Natural killer cell (primary cell): ENCODE measurements at regions of chr18 and their contacts with region 1.

Region 1: GRCh38 chr18:3593904-3594661 is 144.1 kb downstream of the TGIF1 start:
- DNase-seq: peak; percentile 86 to 96
- ATAC-seq: peak; percentile 67 to 87 (median 85)
- H3K4me3 ChIP-seq: peak overlapping the region; percentile 53
- H3K4me3 Mint-ChIP-seq: peak overlapping the region; percentile 93
- H3K27ac ChIP-seq: peak overlapping the region; percentile 97
- H3K27ac Mint-ChIP-seq: peak overlapping the region; percentile 99
- H3K4me1 ChIP-seq: peaks cover 47% of the 10 kb centered on the region
- H3K4me1 Mint-ChIP-seq: peaks cover 47% of the 10 kb centered on the region in 2 donors
- H3K27me3 ChIP-seq: no peaks in the 10 kb centered on the region
- H3K27me3 Mint-ChIP-seq: no peaks in the 10 kb centered on the region
- CTCF ChIP-seq: peak; percentile 75

Region 2: DNA sequence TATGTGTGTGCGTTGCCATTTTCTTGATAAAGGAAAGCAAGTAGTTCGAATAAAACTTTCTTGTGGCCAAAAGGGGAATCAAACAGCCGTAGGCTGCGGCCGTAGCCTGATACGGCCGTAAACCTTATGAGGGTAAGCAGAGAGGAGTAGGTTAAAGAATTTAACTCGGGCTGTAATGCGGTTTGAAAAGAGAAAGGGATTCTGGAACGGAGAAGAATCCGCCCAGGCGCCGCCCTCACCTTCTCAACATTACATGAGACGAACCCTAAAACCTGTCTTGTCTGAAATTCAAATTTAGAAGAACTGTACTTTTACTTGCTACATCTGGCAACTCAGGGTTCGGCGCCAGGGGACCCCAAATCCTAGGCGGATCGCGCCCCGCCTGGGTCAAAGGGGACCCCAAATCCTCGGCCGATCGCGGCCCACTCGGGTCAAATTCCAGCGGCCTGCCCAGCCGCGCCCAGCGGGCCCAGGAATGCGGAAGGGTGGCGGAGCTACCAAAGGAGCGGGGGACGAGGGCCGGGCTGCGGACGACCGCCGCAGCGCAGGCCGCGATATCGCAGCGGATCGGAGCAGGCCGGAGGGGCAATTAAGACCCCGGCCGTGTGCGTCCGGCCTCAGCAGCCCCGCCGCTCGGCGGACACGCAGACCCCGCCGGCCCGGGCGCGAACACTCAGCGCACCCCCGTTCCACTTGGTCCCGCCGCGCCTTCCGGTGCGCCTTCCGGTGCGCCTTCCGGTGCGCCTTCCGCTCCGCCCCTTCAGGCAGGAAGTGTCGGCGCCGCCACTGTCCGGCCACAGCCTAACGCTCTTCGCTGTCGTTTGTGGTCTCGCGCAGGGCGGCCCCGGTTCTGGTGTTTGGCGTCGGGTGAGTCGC is 332.5 kb before region 1 on chr18 and contains the start of gene MYL12B:
- intact Hi-C with region 1: loop called (anchors 5 kb)
- DNase-seq: peak; percentile 82 to 91
- ATAC-seq: peak; percentile 72 to 88 (median 86)
- H3K4me3 ChIP-seq: peak within 1 kb of the TSS; percentile 96
- H3K4me3 Mint-ChIP-seq: peak within 1 kb of the TSS; percentile 94
- H3K27ac ChIP-seq: peak within 1 kb of the TSS; percentile 99
- H3K27ac Mint-ChIP-seq: peak within 1 kb of the TSS; percentile 88
- H3K4me1 ChIP-seq: peaks cover 36% of the 10 kb centered on the region
- H3K4me1 Mint-ChIP-seq: peaks cover 82 to 85% of the 10 kb centered on the region in 2 donors
- H3K27me3 ChIP-seq: no peaks in the 10 kb centered on the region
- H3K27me3 Mint-ChIP-seq: no peaks in the 10 kb centered on the region
- CTCF ChIP-seq: no peak
- total RNA-seq, gene MYL12B: 204 to 214 (median 210) TPM

Region 3: DNA sequence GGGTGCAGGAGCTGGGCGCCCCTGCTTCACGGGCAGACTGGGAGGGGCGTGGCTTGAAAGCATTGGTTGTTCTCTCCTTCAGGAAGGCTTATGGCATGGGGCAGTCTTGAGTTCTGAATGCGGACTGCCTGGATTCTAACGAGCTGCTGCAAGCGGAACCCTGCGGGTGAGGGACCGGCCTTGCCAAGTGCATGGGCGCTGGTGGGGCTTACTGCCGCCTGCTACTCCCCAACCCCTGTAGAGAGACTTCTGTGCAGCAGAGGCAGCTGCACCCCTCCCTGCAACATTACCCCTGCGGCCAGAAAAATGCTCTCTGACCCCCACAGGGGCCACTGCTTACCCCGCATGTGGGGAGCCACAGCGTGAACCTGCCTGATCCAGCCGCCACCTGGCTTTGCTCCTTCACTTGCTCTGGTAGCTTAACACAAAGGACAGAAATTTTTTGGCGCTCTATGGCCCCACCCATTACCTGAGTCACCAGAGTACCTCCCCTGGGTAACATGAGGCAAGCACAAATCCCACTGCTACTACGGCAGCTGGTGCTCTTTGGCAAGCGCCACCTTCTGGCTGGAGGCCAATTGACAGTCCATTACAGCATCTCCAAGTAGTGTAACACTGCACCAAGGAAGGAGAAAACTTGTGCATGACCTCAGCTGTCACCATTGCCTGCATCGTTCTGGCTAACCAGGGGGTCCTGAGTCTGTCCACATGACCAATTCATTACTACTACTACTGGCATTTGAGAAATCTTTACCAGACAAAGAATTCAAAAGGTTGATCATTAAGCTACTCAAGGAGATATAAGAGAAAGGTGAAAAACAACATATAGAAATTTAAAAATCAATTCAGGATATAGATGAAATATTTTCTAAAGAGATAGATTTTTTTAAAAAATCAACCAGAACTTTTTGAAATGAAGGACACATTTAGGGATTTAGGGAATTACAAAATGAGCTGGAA is 296.8 kb before region 1 on chr18:
- intact Hi-C with region 1: loop called (anchors 2 kb)
- DNase-seq: peak; percentile 87 to 95
- ATAC-seq: peak; percentile 98 to 99 (median 99)
- H3K4me3 ChIP-seq: peak overlapping the region; percentile 81
- H3K4me3 Mint-ChIP-seq: peak overlapping the region; percentile 93
- H3K27ac ChIP-seq: peak overlapping the region; percentile 52
- H3K27ac Mint-ChIP-seq: peak overlapping the region; percentile 37 to 88
- H3K4me1 ChIP-seq: peaks cover 14% of the 10 kb centered on the region
- H3K4me1 Mint-ChIP-seq: peaks cover 7 to 14% of the 10 kb centered on the region in 2 donors
- H3K27me3 ChIP-seq: peaks cover 17% of the 10 kb centered on the region
- H3K27me3 Mint-ChIP-seq: peaks cover 27 to 38% of the 10 kb centered on the region in 2 donors
- CTCF ChIP-seq: peak; percentile 75

Region 4: DNA sequence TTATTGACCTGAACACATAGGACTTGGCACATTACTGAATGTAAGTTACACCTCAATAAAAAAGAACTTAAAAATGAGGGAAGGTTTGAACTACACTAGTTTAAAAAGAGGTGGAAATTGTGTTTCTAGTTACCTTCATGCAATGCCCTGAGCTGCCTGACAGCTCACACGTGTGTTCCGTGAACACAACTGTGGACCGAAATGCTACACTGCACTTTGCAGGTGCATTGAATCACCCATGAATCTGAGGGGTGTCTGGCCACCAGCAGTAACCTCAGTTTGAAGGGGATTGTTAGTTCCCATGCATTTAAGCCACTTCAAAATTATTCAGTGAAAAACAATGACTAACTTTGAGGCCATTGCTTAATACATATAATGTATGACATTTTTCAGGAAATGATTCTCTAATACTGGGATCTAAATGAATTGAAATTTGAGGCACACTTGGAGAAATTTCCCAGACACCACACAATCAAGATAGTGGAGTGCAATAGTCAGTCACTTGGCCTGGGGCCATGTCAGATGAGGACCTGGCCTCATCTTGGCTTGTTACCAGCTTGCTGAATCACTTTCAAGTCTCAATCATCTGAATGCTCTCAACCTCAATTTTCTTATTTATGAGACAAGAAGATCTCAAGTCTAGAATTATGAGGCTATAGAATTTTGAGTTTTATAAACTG is 272.8 kb before region 1 on chr18:
- intact Hi-C with region 1: no loop called
- DNase-seq: no peak
- ATAC-seq: no peak
- H3K4me3 ChIP-seq: no peak overlapping the region
- H3K4me3 Mint-ChIP-seq: no peak overlapping the region
- H3K27ac ChIP-seq: no peak overlapping the region
- H3K27ac Mint-ChIP-seq: no peak overlapping the region
- H3K4me1 ChIP-seq: no peaks in the 10 kb centered on the region
- H3K4me1 Mint-ChIP-seq: no peaks in the 10 kb centered on the region
- H3K27me3 ChIP-seq: no peaks in the 10 kb centered on the region
- H3K27me3 Mint-ChIP-seq: peaks cover 6 to 7% of the 10 kb centered on the region in 2 donors
- CTCF ChIP-seq: no peak

Region 5: GRCh38 chr18:3485153-3486149 is 108.6 kb before region 1 on chr18:
- intact Hi-C with region 1: no loop called
- DNase-seq: no peak
- ATAC-seq: no peak
- H3K4me3 ChIP-seq: no peak overlapping the region
- H3K4me3 Mint-ChIP-seq: no peak overlapping the region
- H3K27ac ChIP-seq: no peak overlapping the region
- H3K27ac Mint-ChIP-seq: no peak overlapping the region
- H3K4me1 ChIP-seq: no peaks in the 10 kb centered on the region
- H3K4me1 Mint-ChIP-seq: no peaks in the 10 kb centered on the region
- H3K27me3 ChIP-seq: no peaks in the 10 kb centered on the region
- H3K27me3 Mint-ChIP-seq: peaks cover 4 to 18% of the 10 kb centered on the region in 2 donors
- CTCF ChIP-seq: no peak

Region 6: GRCh38 chr18:3511922-3512372 is 82.1 kb before region 1 on chr18:
- intact Hi-C with region 1: loop called (anchors 2 kb)
- DNase-seq: peak in 1 of 2 donors; percentile 69
- ATAC-seq: peak; percentile 89 to 95 (median 93)
- H3K4me3 ChIP-seq: no peak overlapping the region
- H3K4me3 Mint-ChIP-seq: peak overlapping the region; percentile 43
- H3K27ac ChIP-seq: peak overlapping the region; percentile 20
- H3K27ac Mint-ChIP-seq: peak overlapping the region; percentile 56 to 89
- H3K4me1 ChIP-seq: peaks cover 14% of the 10 kb centered on the region
- H3K4me1 Mint-ChIP-seq: peaks cover 24 to 26% of the 10 kb centered on the region in 2 donors
- H3K27me3 ChIP-seq: no peaks in the 10 kb centered on the region
- H3K27me3 Mint-ChIP-seq: peaks cover 5 to 10% of the 10 kb centered on the region in 2 donors
- CTCF ChIP-seq: no peak

Region 7: DNA sequence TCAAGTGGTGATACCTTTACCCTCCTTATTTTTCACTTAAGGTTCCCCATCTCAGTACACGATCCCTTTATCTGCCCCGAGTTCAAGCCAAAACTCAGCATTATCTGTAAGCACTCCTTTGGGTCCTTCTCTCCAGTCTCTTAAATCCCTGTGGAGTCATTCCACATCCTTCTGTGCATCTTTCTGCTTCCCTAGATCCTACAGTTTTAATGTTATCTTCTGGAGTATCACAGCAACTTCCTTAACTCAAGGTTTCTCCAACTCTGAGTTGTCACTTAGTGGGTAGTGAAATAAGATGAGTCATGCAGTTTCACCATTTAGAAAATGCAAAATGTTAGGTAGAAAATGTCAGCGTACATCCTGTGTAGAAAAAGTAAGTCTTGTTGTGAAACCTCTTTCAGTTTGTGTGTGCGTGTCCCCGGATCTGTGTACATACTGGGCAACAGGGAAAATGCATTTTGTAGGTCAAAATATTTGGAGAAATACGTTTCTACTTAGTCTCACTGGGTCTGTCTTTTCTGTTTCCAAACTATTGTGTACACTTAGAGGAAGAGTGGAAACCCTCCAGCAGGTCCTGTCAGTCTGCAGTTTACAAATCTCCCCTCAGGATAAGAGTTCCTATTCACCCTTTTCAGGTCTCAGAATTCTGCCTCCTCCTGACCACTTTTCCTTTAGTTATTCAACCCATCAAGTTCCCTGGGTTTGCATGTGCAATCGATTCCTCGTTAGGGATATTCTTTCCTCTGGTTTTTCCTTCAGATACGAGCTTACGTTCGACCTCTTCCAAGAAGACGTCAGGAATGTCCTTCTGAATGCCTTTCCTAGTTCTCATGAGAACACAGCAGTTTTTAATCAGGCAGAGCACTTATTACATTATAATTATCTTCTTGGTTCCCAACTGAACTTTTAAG is 10.7 kb after region 1 on chr18:
- intact Hi-C with region 1: loop called (anchors 1 kb)
- DNase-seq: peak in 1 of 2 donors; percentile 72
- ATAC-seq: peak; percentile 70 to 86 (median 75)
- H3K4me3 ChIP-seq: peak overlapping the region; percentile 31
- H3K4me3 Mint-ChIP-seq: no peak overlapping the region
- H3K27ac ChIP-seq: peak overlapping the region; percentile 89
- H3K27ac Mint-ChIP-seq: no peak overlapping the region
- H3K4me1 ChIP-seq: peaks cover 34% of the 10 kb centered on the region
- H3K4me1 Mint-ChIP-seq: no peaks in the 10 kb centered on the region
- H3K27me3 ChIP-seq: no peaks in the 10 kb centered on the region
- H3K27me3 Mint-ChIP-seq: no peaks in the 10 kb centered on the region
- CTCF ChIP-seq: no peak

Region 8: DNA sequence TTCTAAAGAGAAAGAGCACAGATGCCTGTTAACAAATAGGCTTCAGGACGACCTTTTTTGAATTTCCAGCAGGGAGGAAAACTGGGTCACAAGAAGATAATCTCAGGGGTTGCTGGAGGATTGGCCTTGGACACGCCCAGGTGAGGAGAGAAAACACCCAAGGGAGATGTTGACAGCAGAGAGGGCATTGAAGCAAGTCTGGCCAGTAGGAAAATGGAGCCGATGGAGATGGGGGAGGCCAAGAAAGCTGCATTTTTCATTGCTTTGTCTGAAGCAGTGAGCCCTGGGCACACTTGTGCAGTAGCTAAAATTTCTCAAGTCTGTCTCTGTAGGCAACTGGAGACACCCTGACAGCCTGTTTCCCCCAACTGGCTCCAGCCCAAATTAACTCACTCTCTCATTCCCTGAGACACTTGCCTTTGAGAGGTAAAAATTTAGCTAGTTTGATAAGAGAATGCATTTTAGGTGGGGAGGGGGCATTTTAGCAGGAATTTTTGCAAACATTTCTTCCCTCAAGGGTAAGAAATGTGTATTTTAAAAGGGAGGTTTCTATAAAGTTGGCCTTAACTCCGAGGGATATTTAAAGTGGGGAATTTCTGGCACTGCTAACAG is 21.4 kb after region 1 on chr18:
- intact Hi-C with region 1: no loop called
- DNase-seq: no peak
- ATAC-seq: no peak
- H3K4me3 ChIP-seq: no peak overlapping the region
- H3K4me3 Mint-ChIP-seq: no peak overlapping the region
- H3K27ac ChIP-seq: no peak overlapping the region
- H3K27ac Mint-ChIP-seq: no peak overlapping the region
- H3K4me1 ChIP-seq: no peaks in the 10 kb centered on the region
- H3K4me1 Mint-ChIP-seq: no peaks in the 10 kb centered on the region
- H3K27me3 ChIP-seq: no peaks in the 10 kb centered on the region
- H3K27me3 Mint-ChIP-seq: no peaks in the 10 kb centered on the region
- CTCF ChIP-seq: no peak

Region 9: DNA sequence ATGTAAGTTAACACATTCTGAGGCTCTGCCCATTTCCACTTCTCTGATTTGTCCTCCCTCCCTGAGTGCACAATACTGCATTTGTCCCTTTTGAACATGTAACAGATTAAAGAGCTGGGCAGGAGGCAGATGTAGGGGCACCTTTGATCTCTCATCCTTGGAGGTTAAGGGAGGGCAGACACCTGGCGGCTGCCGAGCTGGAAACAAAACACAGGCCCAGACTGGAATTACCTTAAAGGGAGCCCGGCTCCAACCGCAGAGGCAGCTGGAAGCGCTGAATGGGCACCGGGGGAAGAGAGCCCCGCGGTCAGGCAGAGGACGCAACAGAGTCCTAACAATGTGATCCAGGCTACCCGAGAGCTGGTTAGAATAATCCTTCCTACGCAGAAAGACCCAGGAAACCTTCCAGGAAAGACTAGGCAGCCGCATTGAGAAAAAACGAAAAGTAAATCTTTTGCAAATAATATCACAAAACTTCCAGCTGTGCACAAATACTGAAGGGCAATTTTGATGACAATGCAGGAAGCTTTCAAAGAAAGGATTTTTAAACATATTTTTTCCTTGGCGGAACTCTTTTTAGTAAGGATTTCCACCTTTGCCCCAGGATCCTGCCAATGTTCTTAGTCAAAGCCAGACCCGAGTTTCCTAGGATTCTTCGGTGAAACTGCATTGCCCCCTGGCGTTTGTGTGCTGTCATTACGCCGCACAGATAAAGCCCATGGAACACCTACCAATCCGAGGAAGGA is 71.9 kb after region 1 on chr18:
- intact Hi-C with region 1: loop called (anchors 5 kb)
- DNase-seq: peak; percentile 68 to 88
- ATAC-seq: peak; percentile 81 to 94 (median 88)
- H3K4me3 ChIP-seq: no peak overlapping the region
- H3K4me3 Mint-ChIP-seq: peak overlapping the region; percentile 49
- H3K27ac ChIP-seq: no peak overlapping the region
- H3K27ac Mint-ChIP-seq: no peak overlapping the region
- H3K4me1 ChIP-seq: peaks cover 8% of the 10 kb centered on the region
- H3K4me1 Mint-ChIP-seq: peaks cover 3 to 5% of the 10 kb centered on the region in 2 donors
- H3K27me3 ChIP-seq: peaks cover 2% of the 10 kb centered on the region
- H3K27me3 Mint-ChIP-seq: peaks cover 0 to 8% of the 10 kb centered on the region in 2 donors
- CTCF ChIP-seq: peak; percentile 96